A549 (cell line): ENCODE measurements at regions of chr10 and their contacts with region 1.

Region 1: GRCh38 chr10:27482984-27483956 is 20.8 kb upstream of the RAB18 start:
- DNase-seq: peak in 1 of 2 experiments; percentile 5
- ATAC-seq: peak; percentile 55 to 78; a peak in 5 of 6 replicates
- H3K4me3 ChIP-seq: no peak overlapping the region
- H3K27ac ChIP-seq: no peak overlapping the region
- H3K4me1 ChIP-seq: no peaks in the 10 kb centered on the region
- CTCF ChIP-seq: no peak
- EP300 ChIP-seq: no peak
- POLR2A ChIP-seq: no peak
- RAD21 ChIP-seq: no peak

Region 2: GRCh38 chr10:27504007-27504807 is 20.9 kb after region 1 on chr10 and contains the start of gene RAB18:
- CTCF ChIA-PET with region 1: interaction called, 3 read pairs
- POLR2A ChIA-PET with region 1: interaction called, 11 read pairs
- DNase-seq: peak; percentile 90 to 97
- ATAC-seq: peak; percentile 97 to 99
- H3K4me3 ChIP-seq: peak within 1 kb of the TSS; percentile 73
- H3K27ac ChIP-seq: peak within 1 kb of the TSS; percentile 81 to 91
- H3K4me1 ChIP-seq: peaks cover 14% of the 10 kb centered on the region
- CTCF ChIP-seq: no peak
- EP300 ChIP-seq: no peak
- POLR2A ChIP-seq: peak; percentile 96
- RAD21 ChIP-seq: no peak
- polyA plus RNA-seq, gene RAB18: 71.1 and 131 TPM in 2 replicates